Lower leg skin (tissue), 4 donors: ENCODE measurements at regions of chr4 and their contacts with region 1.

Region 1: GRCh38 chr4:174764105-174764729 is 64.8 kb downstream of the GLRA3 start:
- DNase-seq: no peak
- H3K4me3 ChIP-seq: no peak overlapping the region
- CTCF ChIP-seq: no peak
- POLR2A ChIP-seq: no peak

Region 2: DNA sequence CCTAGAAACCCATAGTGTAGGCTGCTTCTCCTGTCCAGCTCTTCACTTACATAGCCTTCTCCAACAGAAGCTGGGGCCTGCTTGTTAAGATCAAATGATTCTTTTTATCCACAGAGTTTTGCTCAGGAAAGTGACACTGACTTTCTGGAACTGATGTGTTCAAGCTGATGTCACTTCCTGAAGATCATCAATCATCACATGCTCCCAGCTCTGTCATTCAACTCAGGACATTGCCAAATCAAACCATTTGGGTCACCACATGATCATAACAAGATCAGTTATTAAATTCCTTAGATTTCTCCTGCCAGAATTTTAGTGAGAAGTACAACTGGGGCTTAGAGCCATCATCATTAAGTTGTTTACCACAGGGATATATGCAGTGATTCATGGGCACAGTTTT is 25.4 kb after region 1 on chr4:
- intact Hi-C with region 1: no loop called
- DNase-seq: no peak
- H3K4me3 ChIP-seq: no peak overlapping the region
- CTCF ChIP-seq: no peak
- POLR2A ChIP-seq: no peak

Region 3: GRCh38 chr4:174815282-174815681 is 51.1 kb after region 1 on chr4:
- intact Hi-C with region 1: no loop called
- DNase-seq: no peak
- H3K4me3 ChIP-seq: no peak overlapping the region
- CTCF ChIP-seq: no peak
- POLR2A ChIP-seq: no peak

Region 4: GRCh38 chr4:174828845-174829701 is 64.9 kb after region 1 on chr4 and contains the start of gene GLRA3:
- intact Hi-C with region 1: no loop called
- DNase-seq: no peak
- H3K4me3 ChIP-seq: no peak within 1 kb of the TSS
- CTCF ChIP-seq: no peak
- POLR2A ChIP-seq: no peak
- total RNA-seq, gene GLRA3: 0.04 TPM in 1 of 4 donors, not detected in the others

Region 5: GRCh38 chr4:175536852-175537453 is 772.7 kb after region 1 on chr4:
- intact Hi-C with region 1: loop called (anchors 10 kb)
- DNase-seq: no peak
- H3K4me3 ChIP-seq: no peak overlapping the region
- CTCF ChIP-seq: no peak
- POLR2A ChIP-seq: no peak